OCI-LY7 (cell line): ENCODE measurements at regions of chrX and their contacts with region 1.

Region 1: GRCh38 chrX:69285881-69286564 is 120.8 kb upstream of the PJA1 start:
- DNase-seq: peak; percentile 49
- H3K4me3 ChIP-seq: peak overlapping the region; percentile 38
- H3K27ac ChIP-seq: no peak overlapping the region
- H3K4me1 ChIP-seq: no peaks in the 10 kb centered on the region
- CTCF ChIP-seq: peak; percentile 71

Region 2: DNA sequence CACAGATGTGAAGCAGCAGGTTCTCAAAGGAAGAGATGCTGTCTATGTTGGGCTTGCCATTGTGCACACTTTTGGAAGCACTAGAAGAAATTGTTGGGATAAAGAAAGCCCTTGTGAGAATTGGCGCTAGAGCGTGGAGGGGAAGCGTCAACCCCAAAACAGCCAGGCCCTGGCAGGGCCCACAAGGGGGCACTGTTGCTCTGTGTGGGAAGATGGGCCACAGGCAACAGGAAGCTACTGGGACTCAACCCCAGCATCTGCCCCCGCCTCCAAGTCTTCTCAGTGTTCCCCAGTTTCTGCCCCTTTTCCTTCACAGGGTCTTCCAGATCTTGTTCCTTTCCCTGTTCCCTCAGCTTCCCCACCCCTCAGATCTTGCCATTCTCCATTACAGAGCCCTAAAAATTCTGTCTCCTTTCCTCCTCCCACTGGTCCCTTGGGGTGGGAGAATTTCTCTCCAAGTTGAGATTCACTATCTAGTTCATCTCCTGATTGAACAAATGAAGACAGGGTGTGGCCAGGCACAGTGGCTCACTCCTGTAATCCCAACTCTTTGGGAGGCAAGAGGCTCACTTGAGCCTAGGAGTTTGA is 553.0 kb before region 1 on chrX:
- CTCF ChIA-PET with region 1: no interaction called
- POLR2A ChIA-PET with region 1: no interaction called
- intact Hi-C with region 1: loop called (anchors 2 kb)
- DNase-seq: peak; percentile 44
- H3K4me3 ChIP-seq: no peak overlapping the region
- H3K27ac ChIP-seq: no peak overlapping the region
- H3K4me1 ChIP-seq: no peaks in the 10 kb centered on the region
- CTCF ChIP-seq: peak; percentile 69

Region 3: DNA sequence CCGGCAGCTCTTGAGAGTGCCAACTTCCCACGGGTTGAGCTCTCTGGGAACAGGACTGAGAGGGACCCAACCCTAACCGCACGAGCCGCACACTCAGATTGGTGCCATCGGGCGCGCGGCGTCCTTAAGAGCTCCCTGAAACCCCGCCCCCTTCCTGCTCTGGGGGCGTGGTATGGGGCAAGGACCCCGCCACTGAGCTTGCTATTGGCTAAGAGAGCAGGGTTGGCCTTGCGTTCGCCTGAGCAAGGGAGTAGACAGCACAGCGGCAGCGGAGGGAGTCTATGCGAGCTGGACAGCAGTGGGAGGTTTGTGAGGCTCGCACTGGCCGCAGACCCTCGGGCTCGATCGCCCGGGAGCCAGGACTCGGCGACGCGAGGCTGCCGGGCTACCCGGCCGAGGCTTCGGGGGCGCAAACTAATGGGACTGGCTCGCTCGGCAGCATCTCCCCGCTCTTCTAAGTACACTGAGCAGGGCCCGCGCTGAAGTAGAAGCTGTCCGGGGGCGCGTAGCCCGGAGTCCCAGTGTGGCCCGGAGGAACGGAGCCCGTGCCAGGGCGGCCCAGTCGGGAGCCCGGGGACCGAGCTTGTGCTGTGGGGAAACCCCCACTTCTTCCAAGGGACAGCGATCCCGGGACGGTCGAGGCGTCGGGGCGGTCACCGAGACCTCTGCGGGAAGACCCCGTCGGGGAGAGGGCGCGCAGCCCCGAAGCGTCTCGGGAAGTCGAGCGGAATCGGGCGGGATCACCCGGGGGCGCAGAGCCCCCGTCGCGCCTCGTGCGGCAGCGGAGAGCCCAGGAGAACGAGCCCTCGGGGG is 457.1 kb before region 1 on chrX and contains the start of gene EFNB1:
- CTCF ChIA-PET with region 1: no interaction called
- POLR2A ChIA-PET with region 1: no interaction called
- intact Hi-C with region 1: loop called (anchors 5 kb)
- DNase-seq: peak; percentile 92
- H3K4me3 ChIP-seq: peak within 1 kb of the TSS; percentile 80
- H3K27ac ChIP-seq: no peak within 1 kb of the TSS
- H3K4me1 ChIP-seq: peaks cover 9% of the 10 kb centered on the region
- CTCF ChIP-seq: no peak
- total RNA-seq, gene EFNB1: 1.8 and 2.0 TPM in 2 replicates